CD4-positive, alpha-beta T cell (primary cell): ENCODE measurements at regions of chr2 and their contacts with region 1.

Region 1: DNA sequence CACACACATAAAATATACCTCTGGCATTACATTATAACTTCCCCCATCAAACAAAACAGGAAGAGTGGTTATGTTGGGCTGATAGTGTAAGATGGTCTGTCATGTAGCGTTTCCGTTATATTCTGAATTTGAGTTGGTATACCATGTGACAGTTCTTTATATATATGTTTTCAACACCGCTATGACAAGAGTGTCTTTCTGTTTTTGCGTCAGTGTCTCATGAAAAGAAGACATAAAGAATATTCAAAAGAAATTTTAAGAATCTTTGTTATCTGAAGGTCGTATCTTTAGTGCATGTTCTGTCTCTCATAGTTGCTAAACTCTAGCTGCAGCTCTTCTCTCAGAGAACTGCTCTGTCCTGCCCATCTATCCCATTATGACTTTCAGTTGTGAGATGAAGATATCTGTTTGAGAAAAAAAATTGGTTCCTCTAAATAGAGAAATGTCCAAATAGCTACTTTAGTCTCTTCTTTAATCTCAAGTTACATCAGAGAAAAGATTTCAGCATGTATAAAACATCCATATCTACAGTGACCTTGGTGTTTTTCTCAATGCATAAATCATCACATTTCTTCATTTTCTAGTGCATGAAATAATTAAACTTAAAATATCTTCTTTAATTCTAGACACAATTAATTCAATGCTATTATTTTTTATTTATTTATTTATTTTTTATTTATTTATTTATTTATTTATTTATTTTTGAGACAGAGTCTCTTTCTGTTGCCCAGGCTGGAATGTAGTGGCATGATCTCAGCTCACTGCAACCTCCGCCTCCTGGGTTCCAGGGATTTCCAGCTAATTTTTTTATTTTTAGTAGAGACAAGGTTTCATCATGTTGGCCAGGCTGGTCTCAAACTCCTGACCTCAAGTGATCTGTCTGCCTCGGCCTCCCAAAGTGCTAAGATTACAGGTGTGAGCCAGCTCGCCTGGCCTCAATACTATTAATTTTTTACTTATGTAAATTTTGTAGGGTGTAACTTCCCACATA is 24.3 kb upstream of the PSME4 start:
- DNase-seq: peak in 3 of 14 experiments; percentile 76 to 88 (median 78)
- ATAC-seq: peak; percentile 93
- H3K4me3 ChIP-seq: peak overlapping the region; percentile 28
- H3K4me3 Mint-ChIP-seq: peak overlapping the region; percentile 59
- H3K27ac ChIP-seq: peak overlapping the region; percentile 69 to 73
- H3K27ac Mint-ChIP-seq: peak overlapping the region; percentile 89
- H3K4me1 ChIP-seq: peaks cover 43% of the 10 kb centered on the region
- H3K4me1 Mint-ChIP-seq: peaks cover 25% of the 10 kb centered on the region
- H3K27me3 ChIP-seq: no peaks in the 10 kb centered on the region
- H3K27me3 Mint-ChIP-seq: no peaks in the 10 kb centered on the region
- CTCF ChIP-seq: no peak

Region 2: DNA sequence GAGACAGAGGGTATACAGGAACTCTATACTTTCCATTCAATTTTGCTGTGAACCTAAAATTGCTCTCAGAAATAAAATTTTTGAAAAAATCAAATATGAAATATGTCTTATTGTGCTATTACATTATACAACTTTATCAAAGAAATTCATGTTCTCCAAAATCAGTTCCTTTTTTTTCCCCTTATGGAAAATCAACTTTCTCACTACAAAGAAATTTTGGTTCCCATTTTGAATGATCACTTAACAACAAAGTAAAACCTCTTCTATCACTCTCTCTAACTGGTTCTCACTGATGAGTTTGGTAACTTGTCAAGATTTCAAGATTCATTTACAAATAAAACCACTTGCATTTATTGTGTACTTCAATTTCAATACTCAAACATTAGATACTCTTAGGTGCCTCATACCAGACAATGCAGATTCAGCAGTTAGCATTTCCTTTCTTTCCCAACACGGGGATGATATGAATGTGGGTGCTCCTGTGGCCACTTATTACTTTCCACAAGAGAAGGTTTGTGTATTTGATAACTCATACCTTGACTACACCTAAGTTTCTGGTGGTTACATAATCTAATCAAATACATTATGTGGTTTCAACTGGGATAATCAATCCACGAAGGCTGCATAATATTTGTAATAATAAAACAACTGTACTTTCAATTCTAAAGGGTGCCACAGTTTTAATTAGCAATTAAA is 30.7 kb before region 1 on chr2:
- CTCF ChIA-PET with region 1: no interaction called
- POLR2A ChIA-PET with region 1: interaction called, 49 read pairs
- intact Hi-C with region 1: loop called in 1 of 2 experiments (anchors 5 kb)
- DNase-seq: no peak
- ATAC-seq: no peak
- H3K4me3 ChIP-seq: no peak overlapping the region
- H3K4me3 Mint-ChIP-seq: no peak overlapping the region
- H3K27ac ChIP-seq: no peak overlapping the region
- H3K27ac Mint-ChIP-seq: no peak overlapping the region
- H3K4me1 ChIP-seq: peaks cover 47% of the 10 kb centered on the region
- H3K4me1 Mint-ChIP-seq: peaks cover 81% of the 10 kb centered on the region
- H3K27me3 ChIP-seq: no peaks in the 10 kb centered on the region
- H3K27me3 Mint-ChIP-seq: no peaks in the 10 kb centered on the region
- CTCF ChIP-seq: no peak

Region 3: GRCh38 chr2:54015798-54016699 is 20.9 kb after region 1 on chr2:
- CTCF ChIA-PET with region 1: no interaction called
- POLR2A ChIA-PET with region 1: interaction called, 16 read pairs
- intact Hi-C with region 1: no loop called
- DNase-seq: no peak
- ATAC-seq: no peak
- H3K4me3 ChIP-seq: no peak overlapping the region
- H3K4me3 Mint-ChIP-seq: no peak overlapping the region
- H3K27ac ChIP-seq: no peak overlapping the region
- H3K27ac Mint-ChIP-seq: peak overlapping the region; percentile 75
- H3K4me1 ChIP-seq: peaks cover 33% of the 10 kb centered on the region
- H3K4me1 Mint-ChIP-seq: peaks cover 46% of the 10 kb centered on the region
- H3K27me3 ChIP-seq: no peaks in the 10 kb centered on the region
- H3K27me3 Mint-ChIP-seq: no peaks in the 10 kb centered on the region
- CTCF ChIP-seq: no peak

Region 4: GRCh38 chr2:54048117-54048785 is 53.1 kb after region 1 on chr2:
- CTCF ChIA-PET with region 1: no interaction called
- POLR2A ChIA-PET with region 1: interaction called, 3 read pairs
- intact Hi-C with region 1: loop called in 1 of 2 experiments (anchors 10 kb)
- DNase-seq: peak in 3 of 14 experiments; percentile 21 to 41 (median 24)
- ATAC-seq: peak; percentile 80
- H3K4me3 ChIP-seq: no peak overlapping the region
- H3K4me3 Mint-ChIP-seq: no peak overlapping the region
- H3K27ac ChIP-seq: no peak overlapping the region
- H3K27ac Mint-ChIP-seq: no peak overlapping the region
- H3K4me1 ChIP-seq: peaks cover 16% of the 10 kb centered on the region
- H3K4me1 Mint-ChIP-seq: peaks cover 19% of the 10 kb centered on the region
- H3K27me3 ChIP-seq: no peaks in the 10 kb centered on the region
- H3K27me3 Mint-ChIP-seq: no peaks in the 10 kb centered on the region
- CTCF ChIP-seq: peak; percentile 34

Region 5: GRCh38 chr2:54589340-54590215 is 594.5 kb after region 1 on chr2:
- CTCF ChIA-PET with region 1: no interaction called
- POLR2A ChIA-PET with region 1: no interaction called
- intact Hi-C with region 1: loop called in 1 of 2 experiments (anchors 10 kb)
- DNase-seq: peak in 8 of 14 experiments; percentile 40 to 81 (median 54)
- ATAC-seq: peak; percentile 61
- H3K4me3 ChIP-seq: peak overlapping the region; percentile 27
- H3K4me3 Mint-ChIP-seq: peak overlapping the region; percentile 74
- H3K27ac ChIP-seq: peak overlapping the region; percentile 74 to 80
- H3K27ac Mint-ChIP-seq: peak overlapping the region; percentile 96
- H3K4me1 ChIP-seq: peaks cover 61% of the 10 kb centered on the region
- H3K4me1 Mint-ChIP-seq: peaks cover 98% of the 10 kb centered on the region
- H3K27me3 ChIP-seq: no peaks in the 10 kb centered on the region
- H3K27me3 Mint-ChIP-seq: no peaks in the 10 kb centered on the region
- CTCF ChIP-seq: no peak

Region 6: GRCh38 chr2:55232084-55232862 is 1237.2 kb after region 1 on chr2 and contains the starts of genes CLHC1 and RPS27A:
- CTCF ChIA-PET with region 1: no interaction called
- POLR2A ChIA-PET with region 1: no interaction called
- intact Hi-C with region 1: loop called in 1 of 2 experiments (anchors 10 kb)
- DNase-seq: peak; percentile 90 to 96 (median 94)
- ATAC-seq: peak; percentile 87
- H3K4me3 ChIP-seq: peak within 1 kb of the TSS; percentile 77
- H3K4me3 Mint-ChIP-seq: peak within 1 kb of the TSS; percentile 95
- H3K27ac ChIP-seq: peak within 1 kb of the TSS; percentile 97 to 100
- H3K27ac Mint-ChIP-seq: peak within 1 kb of the TSS; percentile 92
- H3K4me1 ChIP-seq: peaks cover 31% of the 10 kb centered on the region
- H3K4me1 Mint-ChIP-seq: peaks cover 81% of the 10 kb centered on the region
- H3K27me3 ChIP-seq: no peaks in the 10 kb centered on the region
- H3K27me3 Mint-ChIP-seq: no peaks in the 10 kb centered on the region
- CTCF ChIP-seq: no peak
- total RNA-seq, gene CLHC1: 4.4 TPM
- total RNA-seq, gene RPS27A: 2,201 to 2,315 TPM